Colonic mucosa (tissue), 4 donors: ENCODE measurements at regions of chr21 and their contacts with region 1.

Region 1: GRCh38 chr21:44932408-44933181 is 7.2 kb upstream of the SLX9 start:
- DNase-seq: no peak
- H3K4me3 ChIP-seq: peak overlapping the region; percentile 44
- H3K27ac ChIP-seq: no peak overlapping the region
- H3K4me1 ChIP-seq: peaks cover 10% of the 10 kb centered on the region
- H3K27me3 ChIP-seq: peaks cover 39% of the 10 kb centered on the region
- CTCF ChIP-seq: peak; percentile 53

Region 2: GRCh38 chr21:44890338-44890931 is 42.2 kb before region 1 on chr21:
- intact Hi-C with region 1: loop called (anchors 2 kb)
- DNase-seq: no peak
- H3K4me3 ChIP-seq: no peak overlapping the region
- H3K27ac ChIP-seq: no peak overlapping the region
- H3K4me1 ChIP-seq: no peaks in the 10 kb centered on the region
- H3K27me3 ChIP-seq: no peaks in the 10 kb centered on the region
- CTCF ChIP-seq: no peak